Dorsolateral prefrontal cortex (tissue), 120 donors: ENCODE measurements at regions of chr2 and their contacts with region 1.

Region 1: GRCh38 chr2:12856934-12857601 is 140.3 kb downstream of the TRIB2 start:
- DNase-seq: no peak
- H3K4me3 ChIP-seq: no peak overlapping the region
- H3K27ac ChIP-seq: no peak overlapping the region
- H3K27me3 ChIP-seq: no peaks in the 10 kb centered on the region
- CTCF ChIP-seq: no peak

Region 2: GRCh38 chr2:12903272-12903671 is 46.2 kb after region 1 on chr2:
- intact Hi-C with region 1: loop called in 1 of 2 experiments (anchors 5 kb)
- DNase-seq: no peak
- H3K4me3 ChIP-seq: no peak overlapping the region
- H3K27ac ChIP-seq: no peak overlapping the region
- H3K27me3 ChIP-seq: no peaks in the 10 kb centered on the region
- CTCF ChIP-seq: no peak